WTC11 (cell line): ENCODE measurements at regions of chr19 and their contacts with region 1.

Region 1: DNA sequence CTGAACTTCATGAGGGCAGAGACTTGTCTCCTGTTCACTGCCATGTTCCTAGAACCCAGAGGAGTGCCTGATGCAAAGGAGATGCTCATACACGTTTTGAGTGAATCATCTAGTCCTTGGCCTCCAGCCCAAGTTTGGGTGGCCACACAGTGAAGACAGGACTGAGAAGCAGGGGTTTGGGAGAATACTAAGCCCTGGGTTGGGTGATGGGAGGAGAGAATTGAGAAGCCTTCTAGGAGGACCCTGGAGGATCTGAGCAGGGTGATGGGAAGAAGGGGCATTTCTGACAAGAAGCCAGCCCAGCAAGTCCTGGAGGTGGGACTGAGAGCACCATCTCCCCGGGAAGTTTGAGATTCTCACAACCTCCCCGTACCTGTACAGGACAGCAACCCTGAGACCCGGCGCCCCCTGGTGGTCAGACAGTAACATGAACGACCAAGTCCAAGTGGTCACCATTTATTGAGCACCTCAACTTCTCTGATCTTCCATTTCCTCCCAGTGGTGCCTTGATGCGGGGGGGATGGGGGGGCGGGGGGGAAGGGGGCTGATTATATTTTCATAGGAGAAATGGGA is 11.0 kb downstream of the CTU1 start:
- DNase-seq: peak; percentile 83
- ATAC-seq: peak; percentile 62
- H3K4me3 Mint-ChIP-seq: no peak overlapping the region
- H3K27ac Mint-ChIP-seq: no peak overlapping the region
- H3K4me1 Mint-ChIP-seq: peaks cover 15% of the 10 kb centered on the region
- H3K27me3 Mint-ChIP-seq: no peaks in the 10 kb centered on the region
- CTCF ChIP-seq: peak; percentile 80

Region 2: GRCh38 chr19:50909240-50910070 is 187.8 kb before region 1 on chr19:
- CTCF ChIA-PET with region 1: interaction called, 17 read pairs
- POLR2A ChIA-PET with region 1: no interaction called
- DNase-seq: peak; percentile 100
- ATAC-seq: peak; percentile 92
- H3K4me3 Mint-ChIP-seq: peak overlapping the region; percentile 78
- H3K27ac Mint-ChIP-seq: peak overlapping the region; percentile 36; the same call in 1 of the 2 replicates
- H3K4me1 Mint-ChIP-seq: peaks cover 20% of the 10 kb centered on the region
- H3K27me3 Mint-ChIP-seq: peaks cover 23% of the 10 kb centered on the region
- CTCF ChIP-seq: no peak

Region 3: DNA sequence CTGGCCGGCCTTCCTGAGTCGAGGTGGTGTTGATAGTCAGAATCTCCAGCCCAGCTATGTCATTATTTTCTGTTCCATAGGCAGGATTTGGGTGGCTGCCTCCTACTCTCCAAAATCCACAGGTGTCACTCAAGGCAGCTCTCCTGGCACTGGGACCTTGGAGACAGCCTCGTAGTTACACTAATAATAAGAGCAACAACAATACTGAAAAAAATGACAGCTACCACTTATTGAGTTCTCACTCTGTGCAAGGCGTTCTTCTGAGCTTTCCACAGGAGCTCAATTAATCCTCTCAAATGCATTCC is 50.3 kb before region 1 on chr19:
- CTCF ChIA-PET with region 1: interaction called, 15 read pairs
- POLR2A ChIA-PET with region 1: interaction called, 6 read pairs
- DNase-seq: no peak
- ATAC-seq: no peak
- H3K4me3 Mint-ChIP-seq: peak overlapping the region; percentile 40; the same call in 1 of the 2 replicates
- H3K27ac Mint-ChIP-seq: peak overlapping the region; percentile 99
- H3K4me1 Mint-ChIP-seq: peaks cover 57% of the 10 kb centered on the region
- H3K27me3 Mint-ChIP-seq: no peaks in the 10 kb centered on the region
- CTCF ChIP-seq: no peak

Region 4: DNA sequence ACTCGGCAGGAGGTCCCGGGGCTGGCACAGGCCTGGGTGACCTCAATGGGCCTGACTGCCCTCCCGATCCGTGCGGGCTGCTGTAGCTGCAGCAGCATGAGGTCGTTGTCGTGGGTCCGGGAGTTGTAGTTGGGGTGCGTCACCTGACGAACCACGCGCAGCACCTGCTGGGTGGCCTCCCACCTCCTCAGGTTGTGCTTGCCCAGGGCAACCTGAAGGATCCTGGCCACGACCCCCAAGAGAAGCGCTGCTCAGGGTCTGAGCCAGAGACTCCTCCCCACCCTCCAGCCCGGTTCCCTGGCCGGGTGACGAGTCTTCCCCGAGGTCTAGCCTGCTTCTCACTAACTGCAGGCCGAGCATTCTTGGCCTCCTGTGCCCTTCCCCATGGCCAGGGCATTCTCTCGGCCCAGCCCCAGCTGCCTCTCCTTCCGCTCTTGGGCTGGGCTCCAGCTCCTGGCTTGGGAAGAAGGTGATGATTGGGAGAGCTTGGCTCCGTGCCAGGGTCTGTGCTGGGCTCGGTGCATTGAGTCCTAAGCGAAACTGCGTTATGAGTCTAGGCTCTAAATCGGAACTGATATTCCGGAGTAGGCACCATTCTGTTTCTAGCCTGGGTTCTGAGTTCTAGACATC is 17.7 kb before region 1 on chr19:
- CTCF ChIA-PET with region 1: interaction called, 20 read pairs
- POLR2A ChIA-PET with region 1: no interaction called
- DNase-seq: no peak
- ATAC-seq: no peak
- H3K4me3 Mint-ChIP-seq: no peak overlapping the region
- H3K27ac Mint-ChIP-seq: no peak overlapping the region
- H3K4me1 Mint-ChIP-seq: peaks cover 21% of the 10 kb centered on the region
- H3K27me3 Mint-ChIP-seq: no peaks in the 10 kb centered on the region
- CTCF ChIP-seq: no peak

Region 5: GRCh38 chr19:51135004-51135403 is 37.8 kb after region 1 on chr19:
- CTCF ChIA-PET with region 1: no interaction called
- POLR2A ChIA-PET with region 1: no interaction called
- DNase-seq: no peak
- ATAC-seq: no peak
- H3K4me3 Mint-ChIP-seq: no peak overlapping the region
- H3K27ac Mint-ChIP-seq: no peak overlapping the region
- H3K4me1 Mint-ChIP-seq: peaks cover 14% of the 10 kb centered on the region
- H3K27me3 Mint-ChIP-seq: peaks cover 7% of the 10 kb centered on the region
- CTCF ChIP-seq: no peak